AG04450 (cell line): ENCODE measurements at regions of chr17 and their contacts with region 1.

Region 1: GRCh38 chr17:69672924-69673323 is 258.4 kb downstream of the MAP2K6 start:
- DNase-seq: no peak
- H3K4me3 ChIP-seq: no peak overlapping the region
- H3K27ac ChIP-seq: no peak overlapping the region
- H3K27me3 ChIP-seq: no peaks in the 10 kb centered on the region
- CTCF ChIP-seq: no peak

Region 2: DNA sequence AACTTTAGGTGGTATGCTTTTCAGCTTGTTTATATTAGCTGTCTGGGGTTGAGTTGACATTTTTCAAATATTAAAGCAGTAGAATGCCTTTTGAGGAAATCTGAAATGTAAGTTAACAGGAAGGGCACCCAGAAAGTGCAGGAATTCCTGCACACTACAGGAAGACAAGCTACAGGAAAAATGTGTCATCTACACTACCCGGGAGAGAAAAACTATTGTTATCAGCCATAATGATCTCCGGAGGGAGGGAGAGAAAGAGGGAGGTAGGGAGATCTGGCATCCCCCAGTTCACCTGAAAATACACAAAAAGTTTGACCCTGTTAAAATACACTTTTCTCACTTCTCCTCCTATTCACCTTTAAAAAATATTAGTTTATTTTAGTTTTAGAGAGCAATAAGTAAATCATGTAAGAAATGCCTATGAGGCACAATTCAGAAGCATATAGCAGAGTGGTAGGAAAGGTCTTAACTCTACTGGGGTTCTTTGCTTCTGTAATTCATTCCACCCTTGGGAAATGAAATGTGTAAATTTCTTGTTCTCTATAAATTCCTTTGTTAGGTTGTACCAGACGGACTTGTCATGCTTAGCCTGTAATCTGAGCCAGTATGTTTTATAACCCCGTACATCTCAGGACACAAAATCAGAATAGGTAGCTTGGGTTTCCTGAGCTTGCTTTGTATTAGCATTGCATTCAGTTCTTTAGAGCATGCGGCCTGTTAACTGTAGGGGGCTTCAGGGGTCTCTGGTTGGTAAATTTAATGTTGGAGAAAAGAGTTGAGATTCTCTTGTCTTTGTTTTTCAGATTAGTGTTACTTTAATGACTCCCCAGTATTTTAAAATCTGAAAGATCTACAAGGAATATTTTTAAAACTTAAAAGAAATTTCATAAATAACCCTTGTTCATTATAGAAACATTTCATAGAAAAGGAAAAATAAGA is 255.1 kb before region 1 on chr17:
- CTCF ChIA-PET with region 1: no interaction called
- POLR2A ChIA-PET with region 1: interaction called, 10 read pairs
- DNase-seq: no peak
- H3K4me3 ChIP-seq: no peak overlapping the region
- H3K27ac ChIP-seq: no peak overlapping the region
- H3K27me3 ChIP-seq: peaks cover 2% of the 10 kb centered on the region
- CTCF ChIP-seq: no peak

Region 3: DNA sequence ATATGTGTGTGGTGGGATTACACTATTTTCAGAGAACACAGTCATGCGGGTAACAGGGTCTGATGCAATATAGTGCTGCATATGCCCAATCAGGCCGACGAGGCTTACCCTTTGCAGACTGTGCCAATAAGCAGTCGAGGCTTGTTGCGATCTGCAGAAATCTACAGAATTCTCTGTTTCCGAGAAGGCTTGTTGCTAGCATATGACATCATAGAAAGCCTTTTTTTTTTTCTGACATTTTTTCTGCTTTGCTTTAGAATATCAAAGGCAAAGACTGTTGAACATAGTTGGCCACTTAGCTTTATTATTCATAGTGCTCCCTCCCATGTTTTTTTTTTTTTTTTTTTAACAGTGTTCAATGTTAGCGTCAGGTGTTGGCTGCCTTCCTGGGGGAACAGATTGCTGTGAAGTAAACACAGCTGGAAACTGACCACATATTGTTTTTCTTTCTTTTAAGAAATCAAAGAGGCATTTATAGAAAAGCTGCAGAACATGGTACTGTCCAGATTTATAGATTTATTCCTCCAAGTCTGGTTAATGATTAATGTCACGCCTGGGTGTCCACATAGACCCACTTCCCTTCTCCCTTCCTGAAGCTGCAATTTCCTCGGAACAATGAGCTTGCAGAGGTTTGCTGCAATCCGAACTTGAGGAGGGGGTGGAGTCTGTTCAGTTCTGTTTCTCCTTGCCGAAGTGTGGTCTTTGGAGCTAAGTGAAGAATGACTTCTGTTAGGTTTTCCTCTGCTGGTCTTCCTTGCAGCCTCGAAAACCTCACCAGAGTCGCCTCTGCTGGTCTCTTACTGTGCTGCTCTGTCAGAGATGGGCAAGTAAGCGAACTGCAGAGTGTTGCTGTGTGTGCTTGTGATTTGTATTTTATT is 171.1 kb before region 1 on chr17:
- CTCF ChIA-PET with region 1: no interaction called
- POLR2A ChIA-PET with region 1: no interaction called
- DNase-seq: peak; percentile 82
- H3K4me3 ChIP-seq: peak overlapping the region; percentile 45
- H3K27ac ChIP-seq: peak overlapping the region; percentile 80
- H3K27me3 ChIP-seq: no peaks in the 10 kb centered on the region
- CTCF ChIP-seq: no peak

Region 4: DNA sequence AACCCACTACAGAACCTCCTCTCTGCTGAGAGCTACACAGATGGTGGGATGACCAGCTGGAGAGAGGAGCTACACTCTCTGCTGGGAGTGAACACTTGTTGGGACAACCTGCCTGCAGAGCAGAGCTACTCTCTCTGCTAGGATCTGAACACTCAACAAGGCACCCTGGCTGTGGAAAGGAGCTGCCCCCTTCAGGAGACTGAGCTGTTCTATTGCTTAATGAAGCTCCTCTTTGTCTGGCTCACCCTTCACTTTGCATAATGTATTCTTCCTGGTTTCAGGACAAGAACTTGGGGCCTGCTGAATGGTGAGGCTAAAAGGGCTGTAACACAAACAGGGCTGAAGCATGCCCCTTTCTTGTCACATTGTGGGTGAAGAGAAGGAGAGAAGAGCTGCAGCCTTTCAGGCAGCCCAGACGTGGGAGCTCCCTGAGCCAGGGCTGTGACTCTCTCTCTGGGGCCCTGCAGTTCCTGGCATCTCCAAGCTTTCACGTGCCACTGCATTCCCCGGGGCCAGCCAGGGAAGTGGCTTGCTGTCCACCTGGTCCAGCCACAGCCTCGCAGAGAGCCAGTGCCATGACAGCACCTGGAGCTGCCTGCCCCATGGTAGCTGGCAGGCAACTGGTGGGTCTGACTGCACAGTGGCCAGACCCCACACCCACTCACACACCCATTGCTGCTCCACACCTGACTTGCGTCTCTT is 129.3 kb after region 1 on chr17:
- CTCF ChIA-PET with region 1: interaction called, 10 read pairs
- POLR2A ChIA-PET with region 1: no interaction called
- DNase-seq: no peak
- H3K4me3 ChIP-seq: no peak overlapping the region
- H3K27ac ChIP-seq: no peak overlapping the region
- H3K27me3 ChIP-seq: no peaks in the 10 kb centered on the region
- CTCF ChIP-seq: no peak